ENCODE measurements at regions of chr20 and their contacts with region 1.

Region 1: DNA sequence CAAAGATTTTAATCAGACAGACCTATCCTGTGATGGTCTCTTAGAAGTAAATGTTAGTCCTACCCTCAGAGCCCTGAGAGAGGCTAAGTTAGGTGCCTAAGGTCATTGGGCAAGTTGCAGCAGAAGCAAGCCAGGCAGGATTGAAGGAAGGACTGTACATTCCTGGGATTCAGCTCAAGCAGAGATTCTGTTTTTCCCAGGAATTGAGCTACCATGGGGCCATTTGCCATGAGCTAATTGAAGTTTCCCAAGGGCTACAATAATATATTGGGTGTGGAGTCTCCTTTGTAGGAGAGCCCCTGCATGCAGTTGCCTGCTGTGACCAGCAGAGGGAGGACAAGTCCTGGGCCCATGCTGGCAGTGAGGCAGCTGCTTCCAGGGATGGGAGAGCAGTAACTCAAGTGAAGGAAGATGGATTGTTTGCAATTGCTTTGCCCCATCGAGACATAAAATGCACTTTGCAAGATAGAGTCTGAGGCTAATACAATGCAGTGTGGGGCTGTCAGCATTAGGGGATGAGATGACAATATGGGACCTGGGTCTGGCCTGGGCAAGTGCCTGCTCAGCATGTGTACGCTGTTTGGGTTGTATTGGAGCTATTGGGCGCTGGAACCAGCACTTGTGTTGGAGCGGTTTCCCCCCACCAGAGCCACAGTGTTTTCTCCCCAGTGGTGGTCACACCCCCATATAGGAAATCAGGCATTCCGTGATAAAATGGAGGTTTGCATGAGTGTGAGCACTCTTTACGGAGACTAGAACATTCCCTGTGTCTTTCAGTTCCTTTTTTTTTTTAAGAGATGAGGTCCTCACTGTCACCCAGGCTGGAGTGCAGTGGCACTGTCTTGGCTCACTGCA is 27.9 kb downstream of the DNMT3B start:
- DNase-seq: peak; percentile 56 to 92
- H3K4me3 ChIP-seq: no peak overlapping the region
- CTCF ChIP-seq: peak in 1 of 3 donors; percentile 92
- POLR2A ChIP-seq: no peak

Region 2: GRCh38 chr20:32271620-32272019 is 518.5 kb before region 1 on chr20:
- intact Hi-C with region 1: no loop called
- DNase-seq: no peak
- H3K4me3 ChIP-seq: no peak overlapping the region
- CTCF ChIP-seq: no peak
- POLR2A ChIP-seq: no peak

Region 3: DNA sequence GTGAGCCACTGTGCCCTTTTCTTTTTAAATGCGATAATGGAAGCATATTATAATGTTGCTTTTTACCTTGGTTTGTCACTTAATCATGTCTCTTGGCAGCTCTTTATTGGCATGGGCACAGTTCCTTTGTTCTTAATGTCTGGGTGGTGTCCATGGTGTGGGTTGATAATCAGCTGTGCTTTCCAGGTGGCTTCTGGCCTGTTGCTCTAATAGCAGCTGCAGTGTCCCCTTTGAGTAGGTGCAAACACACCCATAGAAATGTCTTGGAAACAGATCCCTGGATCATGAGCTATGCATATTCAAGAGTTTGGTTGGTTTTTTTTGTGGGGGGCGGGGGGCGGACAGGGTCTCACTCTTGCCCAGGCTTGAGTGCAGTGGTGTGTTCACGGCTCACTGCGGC is 98.5 kb after region 1 on chr20:
- intact Hi-C with region 1: loop called (anchors 10 kb)
- DNase-seq: no peak
- H3K4me3 ChIP-seq: no peak overlapping the region
- CTCF ChIP-seq: no peak
- POLR2A ChIP-seq: no peak

Region 4: DNA sequence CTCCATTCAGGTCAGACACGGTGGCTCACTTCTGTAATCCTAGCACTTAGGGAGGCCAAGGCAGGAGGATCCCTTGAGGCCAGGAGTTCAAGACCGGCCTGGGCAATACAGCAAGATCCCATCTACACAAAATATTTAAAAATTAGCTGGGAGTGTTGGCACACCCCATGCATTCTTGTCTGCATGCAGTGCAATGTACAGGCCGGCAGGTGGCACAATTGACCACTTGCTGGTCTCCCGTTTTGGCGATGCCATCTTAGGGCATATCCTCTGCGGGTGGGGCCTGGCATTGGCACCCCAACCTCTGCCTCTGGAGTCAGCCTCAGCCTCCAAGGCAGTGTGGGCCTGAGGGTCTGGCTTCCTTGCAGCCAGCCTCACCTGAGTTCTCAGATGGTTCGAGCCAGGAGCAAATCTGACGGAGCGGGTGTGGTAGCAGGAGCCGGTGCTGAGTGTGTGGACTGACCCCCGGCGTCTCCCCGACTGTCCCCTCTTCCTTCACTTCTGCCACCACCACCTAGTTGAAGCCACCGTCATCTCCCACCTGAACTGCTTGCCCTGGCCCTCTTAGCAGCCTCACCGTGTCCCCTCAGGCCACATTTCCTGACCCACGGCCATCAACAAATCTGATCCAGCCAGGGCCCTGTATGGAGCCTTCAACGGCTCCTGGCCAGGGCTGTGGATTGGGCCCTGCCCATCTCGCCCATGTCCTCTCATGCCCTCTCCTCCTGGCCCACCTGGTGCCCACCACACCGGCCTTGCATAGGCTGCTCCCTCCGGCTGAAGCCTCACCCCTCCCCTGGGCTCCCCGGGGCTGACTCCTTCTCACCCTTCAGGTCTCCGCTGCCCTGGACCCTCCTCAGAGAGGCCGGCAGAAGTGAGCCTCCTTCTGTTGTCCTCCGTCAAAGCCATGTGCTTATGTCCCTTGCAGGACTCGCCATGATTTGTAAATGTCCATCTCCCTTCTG is 112.6 kb after region 1 on chr20:
- intact Hi-C with region 1: loop called (anchors 5 kb)
- DNase-seq: no peak
- H3K4me3 ChIP-seq: no peak overlapping the region
- CTCF ChIP-seq: peak in 1 of 3 donors; percentile 57
- POLR2A ChIP-seq: no peak